PC-9 (cell line): ENCODE measurements at regions of chr2 and their contacts with region 1.

Region 1: DNA sequence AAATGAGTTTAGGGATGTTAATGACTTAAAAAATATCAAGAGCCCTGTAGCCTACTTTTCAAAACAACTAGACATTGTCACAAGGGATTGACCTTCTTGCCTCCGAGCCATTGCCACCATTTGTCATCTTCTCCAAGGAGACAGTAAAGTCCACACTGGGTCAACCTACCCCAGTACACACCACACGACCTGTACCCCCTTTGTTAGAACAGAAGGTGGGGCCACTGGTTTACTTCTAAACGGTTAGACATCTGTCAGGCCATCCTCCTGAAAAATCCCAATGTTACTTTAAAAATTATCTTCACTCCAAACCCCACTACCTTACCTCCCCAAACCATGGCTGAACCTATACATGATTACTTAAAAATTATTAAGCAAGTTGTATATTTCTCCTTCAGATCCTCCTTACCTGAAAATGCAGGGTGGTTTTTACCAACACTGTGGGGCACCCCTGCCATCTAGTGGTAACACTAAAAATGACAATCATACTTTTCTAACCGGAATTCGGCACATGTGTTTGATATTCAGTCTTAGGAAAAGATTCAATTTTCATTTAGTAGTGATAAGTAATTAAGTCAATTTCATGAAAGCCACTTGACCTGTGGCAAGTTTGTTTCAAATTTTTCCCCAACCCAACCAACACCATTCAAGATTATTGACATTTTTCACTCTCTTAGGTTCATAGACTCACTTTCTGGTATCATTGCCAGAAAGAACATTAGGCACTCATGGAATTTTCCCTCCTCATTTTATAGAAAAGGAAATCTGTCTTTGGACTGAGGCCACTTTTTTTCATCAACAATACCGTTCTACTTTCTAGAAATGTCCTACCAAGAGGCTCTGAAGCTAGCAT is 265.3 kb upstream of the PKDCC start:
- DNase-seq: peak in 1 of 2 experiments; percentile 24
- H3K4me3 ChIP-seq: no peak overlapping the region
- H3K27ac ChIP-seq: no peak overlapping the region
- H3K4me1 ChIP-seq: no peaks in the 10 kb centered on the region
- H3K27me3 ChIP-seq: peaks cover 26% of the 10 kb centered on the region; the same call in 1 of the 2 replicates
- CTCF ChIP-seq: peak; percentile 97

Region 2: GRCh38 chr2:39837856-39838453 is 1944.6 kb before region 1 on chr2:
- CTCF ChIA-PET with region 1: no interaction called
- POLR2A ChIA-PET with region 1: no interaction called
- intact Hi-C with region 1: loop called (anchors 5 kb)
- DNase-seq: peak; percentile 46 to 57
- H3K4me3 ChIP-seq: no peak overlapping the region
- H3K27ac ChIP-seq: no peak overlapping the region
- H3K4me1 ChIP-seq: no peaks in the 10 kb centered on the region
- H3K27me3 ChIP-seq: no peaks in the 10 kb centered on the region
- CTCF ChIP-seq: peak; percentile 99

Region 3: GRCh38 chr2:41414486-41415230 is 367.9 kb before region 1 on chr2:
- CTCF ChIA-PET with region 1: no interaction called
- POLR2A ChIA-PET with region 1: no interaction called
- intact Hi-C with region 1: loop called (anchors 2 kb)
- DNase-seq: peak in 1 of 2 experiments; percentile 41
- H3K4me3 ChIP-seq: no peak overlapping the region
- H3K27ac ChIP-seq: no peak overlapping the region
- H3K4me1 ChIP-seq: no peaks in the 10 kb centered on the region
- H3K27me3 ChIP-seq: no peaks in the 10 kb centered on the region
- CTCF ChIP-seq: peak; percentile 77

Region 4: GRCh38 chr2:41829011-41829500 is 46.5 kb after region 1 on chr2:
- CTCF ChIA-PET with region 1: no interaction called
- POLR2A ChIA-PET with region 1: no interaction called
- intact Hi-C with region 1: no loop called
- DNase-seq: no peak
- H3K4me3 ChIP-seq: no peak overlapping the region
- H3K27ac ChIP-seq: no peak overlapping the region
- H3K4me1 ChIP-seq: no peaks in the 10 kb centered on the region
- H3K27me3 ChIP-seq: peaks cover 66% of the 10 kb centered on the region
- CTCF ChIP-seq: no peak